ENCODE measurements at regions of chr2 and their contacts with region 1.

Region 1: DNA sequence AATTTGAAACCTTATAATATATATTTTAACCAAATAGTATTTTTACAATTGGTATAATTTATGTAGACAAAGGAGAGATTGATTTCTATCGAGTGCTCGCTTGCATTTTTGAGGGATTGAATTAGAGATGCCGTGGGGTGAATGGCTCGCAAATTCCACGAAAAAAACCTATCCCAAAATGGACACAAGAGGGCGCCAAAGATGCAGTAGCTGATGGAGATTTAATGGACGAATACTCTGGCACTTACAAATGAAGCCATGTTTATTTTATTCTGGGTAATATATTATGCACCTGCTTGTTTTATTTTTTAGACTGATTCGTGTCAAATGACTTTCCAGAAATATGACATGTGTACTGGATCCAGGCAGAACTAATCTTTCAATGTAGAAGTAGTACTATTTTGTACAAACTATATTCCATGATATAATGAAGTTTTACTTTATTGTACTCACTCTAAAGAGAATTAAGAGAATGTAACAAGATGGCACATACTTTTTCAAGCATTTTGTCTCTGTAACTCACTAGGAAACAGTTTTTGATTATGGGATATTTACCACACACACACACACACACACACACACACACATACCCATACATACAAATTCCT is 505.4 kb downstream of the PLCL1 start:
- DNase-seq: no peak
- ATAC-seq: no peak
- H3K4me3 ChIP-seq: no peak overlapping the region
- H3K27ac ChIP-seq: no peak overlapping the region
- H3K4me1 ChIP-seq: no peaks in the 10 kb centered on the region
- H3K27me3 ChIP-seq: peaks cover 0 to 1% of the 10 kb centered on the region in 2 donors

Region 2: GRCh38 chr2:198337368-198337767 is 27.6 kb after region 1 on chr2:
- intact Hi-C with region 1: no loop called
- DNase-seq: no peak
- ATAC-seq: no peak
- H3K4me3 ChIP-seq: no peak overlapping the region
- H3K27ac ChIP-seq: no peak overlapping the region
- H3K4me1 ChIP-seq: no peaks in the 10 kb centered on the region
- H3K27me3 ChIP-seq: no peaks in the 10 kb centered on the region

Region 3: DNA sequence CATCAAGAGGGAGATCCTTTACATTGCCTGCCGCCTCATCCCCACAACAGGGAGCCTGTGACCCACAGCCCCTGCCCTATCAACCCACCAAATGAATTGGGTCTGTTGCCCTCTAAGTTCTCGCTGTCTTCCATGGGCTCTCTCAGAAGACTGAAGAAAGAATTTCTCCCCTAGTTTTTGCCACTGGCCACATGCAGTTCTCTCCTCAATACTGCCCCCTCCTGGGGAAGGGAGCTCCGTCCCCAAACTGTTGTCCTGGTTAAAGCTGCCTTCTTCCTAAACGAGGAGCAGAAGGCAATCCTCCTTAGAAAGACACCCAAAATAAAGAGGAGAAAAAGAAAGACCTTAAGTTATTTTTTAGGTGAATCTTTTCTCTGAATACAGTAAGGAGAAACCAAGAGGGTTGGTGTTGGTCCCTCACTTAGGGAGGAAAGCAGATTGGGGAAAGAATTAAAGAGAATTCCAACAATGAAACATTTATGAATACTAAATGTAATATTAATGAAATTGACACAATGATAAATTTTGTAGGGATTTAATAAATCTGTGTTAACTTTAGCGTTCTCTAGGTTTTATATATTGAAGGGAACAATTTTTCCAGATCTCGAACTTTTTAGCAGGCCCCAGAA is 1179.1 kb after region 1 on chr2:
- intact Hi-C with region 1: loop called (anchors 5 kb)
- DNase-seq: no peak
- ATAC-seq: peak; percentile 53
- H3K4me3 ChIP-seq: no peak overlapping the region
- H3K27ac ChIP-seq: no peak overlapping the region
- H3K4me1 ChIP-seq: no peaks in the 10 kb centered on the region
- H3K27me3 ChIP-seq: peaks cover 0 to 2% of the 10 kb centered on the region in 2 donors

Region 4: GRCh38 chr2:199739413-199740110 is 1429.8 kb after region 1 on chr2:
- intact Hi-C with region 1: loop called (anchors 5 kb)
- DNase-seq: peak; percentile 73 to 90
- ATAC-seq: peak; percentile 78
- H3K4me3 ChIP-seq: no peak overlapping the region
- H3K27ac ChIP-seq: no peak overlapping the region
- H3K4me1 ChIP-seq: no peaks in the 10 kb centered on the region
- H3K27me3 ChIP-seq: no peaks in the 10 kb centered on the region